Activated CD4-positive, alpha-beta memory T cell treated with anti-CD3 and anti-CD28 coated beads for 36 hours (primary cell): ENCODE measurements at regions of chrX and their contacts with region 1.

Region 1: GRCh38 chrX:107627838-107628661 is at the start of gene PRPS1:
- DNase-seq: peak; percentile 93
- H3K4me3 Mint-ChIP-seq: peak within 1 kb of the TSS; percentile 84
- H3K27ac Mint-ChIP-seq: peak within 1 kb of the TSS; percentile 85
- H3K4me1 Mint-ChIP-seq: peaks cover 25% of the 10 kb centered on the region
- H3K27me3 Mint-ChIP-seq: no peaks in the 10 kb centered on the region
- total RNA-seq, gene PRPS1: 132 to 141 TPM

Region 2: GRCh38 chrX:106999002-106999975 is 628.8 kb before region 1 on chrX:
- CTCF ChIA-PET with region 1: no interaction called
- POLR2A ChIA-PET with region 1: interaction called, 4 read pairs
- intact Hi-C with region 1: loop called (anchors 5 kb)
- DNase-seq: peak; percentile 62
- H3K4me3 Mint-ChIP-seq: peak overlapping the region; percentile 70
- H3K27ac Mint-ChIP-seq: no peak overlapping the region
- H3K4me1 Mint-ChIP-seq: peaks cover 7% of the 10 kb centered on the region
- H3K27me3 Mint-ChIP-seq: no peaks in the 10 kb centered on the region

Region 3: GRCh38 chrX:107537815-107538214 is 90.2 kb before region 1 on chrX:
- CTCF ChIA-PET with region 1: interaction called, 15 read pairs
- POLR2A ChIA-PET with region 1: no interaction called
- intact Hi-C with region 1: loop called (anchors 2 kb)
- DNase-seq: peak; percentile 50
- H3K4me3 Mint-ChIP-seq: no peak overlapping the region
- H3K27ac Mint-ChIP-seq: no peak overlapping the region
- H3K4me1 Mint-ChIP-seq: no peaks in the 10 kb centered on the region
- H3K27me3 Mint-ChIP-seq: peaks cover 8% of the 10 kb centered on the region

Region 4: GRCh38 chrX:107716816-107717700 is 89.0 kb after region 1 on chrX:
- CTCF ChIA-PET with region 1: interaction called, 5 read pairs
- POLR2A ChIA-PET with region 1: interaction called, 29 read pairs
- intact Hi-C with region 1: loop called (anchors 1 kb)
- DNase-seq: peak; percentile 91
- H3K4me3 Mint-ChIP-seq: peak overlapping the region; percentile 89
- H3K27ac Mint-ChIP-seq: peak overlapping the region; percentile 90
- H3K4me1 Mint-ChIP-seq: peaks cover 44% of the 10 kb centered on the region
- H3K27me3 Mint-ChIP-seq: no peaks in the 10 kb centered on the region

Region 5: DNA sequence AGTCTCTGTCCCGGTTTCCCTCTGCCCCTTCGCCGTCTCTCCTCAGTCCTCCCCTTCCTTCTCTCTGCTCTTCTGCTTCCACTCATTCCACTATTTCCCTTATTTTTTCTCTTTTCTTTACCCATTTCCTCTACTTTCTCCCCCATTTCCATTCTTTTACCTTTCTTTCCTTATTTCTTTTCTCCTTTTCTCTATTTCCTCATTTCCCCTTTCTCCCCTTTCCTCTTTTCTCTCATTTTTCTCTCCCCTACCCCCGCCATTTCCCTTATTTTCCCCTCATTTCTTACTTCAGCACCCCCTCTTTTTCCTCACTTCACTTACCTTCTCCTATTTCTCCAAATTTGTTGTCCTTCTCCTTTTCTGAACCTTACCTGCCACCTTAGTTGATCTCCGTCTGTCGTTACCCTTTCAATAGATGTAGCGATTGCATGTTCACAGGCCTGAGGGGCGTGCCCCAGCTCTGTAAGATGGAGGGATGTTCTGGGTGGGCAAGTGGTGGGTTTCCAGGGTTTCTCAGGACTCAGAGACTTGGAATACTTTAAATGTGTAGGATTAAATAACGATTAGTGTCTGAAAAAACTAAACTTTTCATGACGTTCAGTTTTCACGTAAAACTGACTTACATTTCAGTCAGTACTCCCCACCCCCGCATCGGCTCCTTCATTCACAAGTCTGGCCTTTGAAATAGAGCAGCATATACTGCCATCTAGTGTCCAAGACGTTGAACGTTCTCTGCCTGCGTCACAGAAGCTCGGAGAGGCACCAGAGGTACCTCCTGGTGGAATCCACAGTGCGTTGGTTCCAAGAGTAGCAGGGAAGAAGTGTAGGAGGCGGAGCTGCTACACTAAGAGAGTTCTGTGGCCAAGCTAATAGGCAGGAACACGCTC is 148.8 kb after region 1 on chrX:
- CTCF ChIA-PET with region 1: interaction called, 12 read pairs
- POLR2A ChIA-PET with region 1: interaction called, 9 read pairs
- intact Hi-C with region 1: no loop called
- DNase-seq: peak; percentile 84
- H3K4me3 Mint-ChIP-seq: peak overlapping the region; percentile 86
- H3K27ac Mint-ChIP-seq: no peak overlapping the region
- H3K4me1 Mint-ChIP-seq: peaks cover 7% of the 10 kb centered on the region
- H3K27me3 Mint-ChIP-seq: no peaks in the 10 kb centered on the region

Region 6: GRCh38 chrX:108091266-108091877 is 463.3 kb after region 1 on chrX and contains the starts of genes ATG4A and PSMD10:
- CTCF ChIA-PET with region 1: no interaction called
- POLR2A ChIA-PET with region 1: interaction called, 6 read pairs
- intact Hi-C with region 1: loop called (anchors 1 kb)
- DNase-seq: peak; percentile 94
- H3K4me3 Mint-ChIP-seq: no peak within 1 kb of the TSS
- H3K27ac Mint-ChIP-seq: no peak within 1 kb of the TSS
- H3K4me1 Mint-ChIP-seq: peaks cover 9% of the 10 kb centered on the region
- H3K27me3 Mint-ChIP-seq: no peaks in the 10 kb centered on the region
- total RNA-seq, gene ATG4A: 8.7 to 9.7 TPM
- total RNA-seq, gene PSMD10: 52.6 to 63.5 TPM